ENCODE measurements at regions of chr9 and their contacts with region 1.

Region 1: DNA sequence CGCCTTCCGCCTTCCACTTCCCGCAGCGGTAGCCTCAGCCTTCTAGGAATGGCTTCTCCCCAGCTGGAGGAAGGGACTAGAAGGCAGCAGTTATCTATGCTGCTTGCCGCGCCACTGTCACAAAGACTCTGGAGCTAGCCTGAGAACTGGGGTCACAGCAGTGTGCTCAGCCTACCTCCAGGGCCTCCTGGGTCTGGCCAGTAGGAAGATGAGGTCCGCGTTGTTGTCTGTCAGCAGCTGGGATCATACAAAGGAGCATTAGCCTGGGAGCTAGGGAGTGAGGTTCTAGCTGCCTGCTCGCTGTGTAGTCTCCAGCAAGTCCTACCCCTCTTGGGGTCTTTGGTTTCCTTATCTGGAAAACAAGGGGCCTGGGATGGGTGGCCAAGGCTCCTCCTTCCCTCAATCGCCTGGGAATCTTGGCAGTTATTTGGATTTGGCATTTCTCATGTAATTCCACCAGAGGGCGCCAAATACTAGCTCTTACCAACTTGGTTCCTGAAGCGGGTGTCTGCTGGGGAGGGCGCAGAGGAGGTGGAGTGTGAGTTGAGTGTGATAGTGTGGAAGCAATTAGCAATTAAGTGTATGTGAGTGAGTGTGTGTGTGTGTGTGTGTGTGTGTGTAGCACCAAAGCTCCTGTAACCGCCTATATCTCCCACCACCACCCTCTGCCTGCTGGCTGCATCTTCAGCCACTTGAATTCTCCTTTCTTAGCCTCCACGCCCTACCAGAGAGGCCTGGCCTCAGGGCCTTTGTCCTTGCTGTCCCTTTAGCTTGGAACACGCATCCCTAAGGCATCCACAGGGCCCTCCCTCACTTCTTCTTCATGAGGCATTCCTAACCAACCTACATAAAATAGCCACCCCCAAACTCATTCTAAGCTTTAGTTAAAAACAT is 97.1 kb downstream of the ENTREP1 start:
- DNase-seq: peak in 9 of 10 donors; percentile 56 to 75 (median 65)
- H3K4me3 ChIP-seq: no peak overlapping the region
- H3K27ac ChIP-seq: no peak overlapping the region
- H3K27me3 ChIP-seq: no peaks in the 10 kb centered on the region
- CTCF ChIP-seq: peak; percentile 59 to 94 (median 86)

Region 2: GRCh38 chr9:69385581-69386033 is 36.5 kb before region 1 on chr9:
- intact Hi-C with region 1: no loop called
- DNase-seq: no peak
- H3K4me3 ChIP-seq: no peak overlapping the region
- H3K27ac ChIP-seq: no peak overlapping the region
- H3K27me3 ChIP-seq: peaks cover 0 to 6% (median 0%) of the 10 kb centered on the region in 45 donors
- CTCF ChIP-seq: no peak

Region 3: DNA sequence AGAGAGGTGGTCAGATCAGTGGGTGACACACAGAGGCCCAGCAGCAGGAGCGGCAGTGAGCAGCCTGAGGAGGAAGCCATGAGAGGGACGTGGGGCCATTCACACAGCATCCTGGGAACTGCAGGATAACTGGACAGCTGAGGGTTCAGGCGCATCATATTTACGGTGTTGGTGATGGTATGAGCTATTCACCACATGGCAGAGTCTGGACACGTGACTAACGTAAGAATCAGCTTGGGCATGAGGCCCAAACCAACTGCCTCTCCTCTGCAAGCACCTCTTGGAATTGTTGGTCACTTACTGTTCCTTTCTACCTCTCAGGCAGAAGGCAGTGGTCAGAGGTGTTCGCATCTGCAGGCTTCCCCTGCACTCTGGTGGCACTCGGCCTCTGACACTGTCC is 44.0 kb after region 1 on chr9:
- intact Hi-C with region 1: no loop called
- DNase-seq: no peak
- H3K4me3 ChIP-seq: no peak overlapping the region
- H3K27ac ChIP-seq: no peak overlapping the region
- H3K27me3 ChIP-seq: no peaks in the 10 kb centered on the region
- CTCF ChIP-seq: no peak

Region 4: DNA sequence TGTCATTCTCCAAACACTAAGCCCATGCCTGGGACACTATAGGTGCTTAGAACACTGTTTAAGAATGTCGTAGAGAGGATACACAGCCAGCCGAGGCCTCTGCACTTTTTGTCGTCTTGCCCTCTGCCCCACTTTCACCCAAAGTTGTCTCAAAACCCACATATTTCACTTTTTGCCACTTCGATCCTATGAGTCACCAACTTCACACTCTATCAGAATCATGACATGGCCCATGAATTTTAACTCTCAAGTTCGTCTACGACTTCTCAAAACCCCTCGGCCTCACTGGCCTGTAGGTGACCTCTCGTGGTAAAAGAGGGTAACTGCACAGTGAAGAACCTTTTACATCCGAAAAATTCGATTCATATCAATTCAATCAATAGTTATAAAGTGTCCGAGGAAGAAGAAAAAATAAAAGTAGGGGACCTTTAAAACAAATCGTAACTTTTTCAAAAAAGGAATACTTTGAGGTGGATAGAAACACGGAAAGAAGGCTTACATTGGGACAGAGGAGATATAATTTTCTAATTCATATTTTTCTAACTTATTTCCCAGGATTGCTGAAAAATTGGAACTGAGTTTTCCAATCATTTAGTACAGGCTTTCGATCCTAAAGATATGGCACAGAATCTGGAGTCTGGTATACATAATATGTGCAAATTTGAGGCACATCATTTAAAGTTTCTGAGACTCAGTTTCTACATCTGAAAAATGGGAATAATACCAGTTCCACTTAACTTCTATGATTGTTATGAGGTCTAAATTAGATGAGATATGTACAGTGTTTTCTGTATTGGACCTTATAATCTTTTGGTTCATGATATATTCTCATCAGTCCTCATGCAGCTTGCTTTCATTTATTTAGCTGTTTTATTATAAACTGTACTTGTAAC is 127.4 kb after region 1 on chr9:
- intact Hi-C with region 1: loop called (anchors 2 to 5 kb)
- DNase-seq: peak in 1 of 10 donors; percentile 22
- H3K4me3 ChIP-seq: peak overlapping the region in 8 of 59 donors; percentile 2 to 44 (median 15)
- H3K27ac ChIP-seq: peak overlapping the region in 27 of 59 donors; percentile 0 to 76 (median 44)
- H3K27me3 ChIP-seq: no peaks in the 10 kb centered on the region
- CTCF ChIP-seq: peak; percentile 66 to 98 (median 86)

Region 5: GRCh38 chr9:69759421-69760277 is 337.5 kb after region 1 on chr9 and contains the start of gene PTAR1:
- intact Hi-C with region 1: loop called in 1 of 2 experiments (anchors 10 kb)
- DNase-seq: peak; percentile 78 to 90 (median 84)
- H3K4me3 ChIP-seq: peak within 1 kb of the TSS; percentile 54 to 98 (median 86)
- H3K27ac ChIP-seq: peak within 1 kb of the TSS; percentile 67 to 98 (median 94)
- H3K27me3 ChIP-seq: no peaks in the 10 kb centered on the region
- CTCF ChIP-seq: peak in 40 of 56 donors; percentile 2 to 58 (median 24)
- total RNA-seq, gene PTAR1: 42.5 to 120 (median 68.6) TPM

Region 6: GRCh38 chr9:69877854-69878514 is 455.8 kb after region 1 on chr9:
- intact Hi-C with region 1: loop called (anchors 2 to 5 kb)
- DNase-seq: no peak
- H3K4me3 ChIP-seq: no peak overlapping the region
- H3K27ac ChIP-seq: no peak overlapping the region
- H3K27me3 ChIP-seq: no peaks in the 10 kb centered on the region
- CTCF ChIP-seq: peak; percentile 39 to 84 (median 67)

Region 7: GRCh38 chr9:69919461-69920061 is 497.4 kb after region 1 on chr9:
- intact Hi-C with region 1: loop called in 1 of 2 experiments (anchors 5 kb)
- DNase-seq: peak in 1 of 10 donors; percentile 14
- H3K4me3 ChIP-seq: no peak overlapping the region
- H3K27ac ChIP-seq: no peak overlapping the region
- H3K27me3 ChIP-seq: peaks cover 0 to 8% (median 0%) of the 10 kb centered on the region in 45 donors
- CTCF ChIP-seq: peak; percentile 62 to 90 (median 81)

Region 8: GRCh38 chr9:69932901-69933300 is 510.7 kb after region 1 on chr9:
- intact Hi-C with region 1: loop called in 1 of 2 experiments (anchors 5 kb)
- DNase-seq: peak in 1 of 10 donors; percentile 7
- H3K4me3 ChIP-seq: no peak overlapping the region
- H3K27ac ChIP-seq: no peak overlapping the region
- H3K27me3 ChIP-seq: peaks cover 0 to 3% (median 0%) of the 10 kb centered on the region in 45 donors
- CTCF ChIP-seq: peak in 32 of 56 donors; percentile 10 to 49 (median 27)